GM23248 (cell line): ENCODE measurements at regions of chr10 and their contacts with region 1.

Region 1: GRCh38 chr10:4767033-4767814 is 58.8 kb upstream of the AKR1E2 start:
- DNase-seq: peak; percentile 73
- H3K4me3 ChIP-seq: no peak overlapping the region
- H3K27ac ChIP-seq: peak overlapping the region; percentile 85
- H3K4me1 ChIP-seq: peaks cover 95% of the 10 kb centered on the region
- H3K27me3 ChIP-seq: no peaks in the 10 kb centered on the region

Region 2: DNA sequence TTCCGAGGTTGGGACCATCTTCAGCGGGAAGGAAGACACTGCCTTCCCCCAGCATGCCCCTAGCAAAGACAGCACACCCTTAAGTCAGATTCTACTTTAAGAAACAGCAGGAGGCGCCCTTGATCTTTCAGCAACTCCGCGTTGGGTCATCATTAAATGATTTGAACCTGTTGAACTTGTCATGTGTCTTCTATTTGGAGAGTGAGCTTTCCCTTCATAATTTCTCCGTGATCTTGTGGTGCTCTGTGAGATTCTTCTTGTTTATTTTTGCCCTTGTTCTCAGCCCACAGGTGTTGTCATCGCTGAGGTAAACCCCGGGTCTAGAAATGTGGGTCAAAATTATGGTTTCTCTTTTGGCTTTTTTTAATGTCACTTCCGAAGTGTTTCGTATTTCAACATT is 1545.2 kb before region 1 on chr10:
- in situ Hi-C with region 1: loop called (anchors 25 kb)
- DNase-seq: peak; percentile 74
- H3K4me3 ChIP-seq: peak overlapping the region; percentile 44
- H3K27ac ChIP-seq: peak overlapping the region; percentile 59
- H3K4me1 ChIP-seq: peaks cover 50% of the 10 kb centered on the region
- H3K27me3 ChIP-seq: no peaks in the 10 kb centered on the region

Region 3: DNA sequence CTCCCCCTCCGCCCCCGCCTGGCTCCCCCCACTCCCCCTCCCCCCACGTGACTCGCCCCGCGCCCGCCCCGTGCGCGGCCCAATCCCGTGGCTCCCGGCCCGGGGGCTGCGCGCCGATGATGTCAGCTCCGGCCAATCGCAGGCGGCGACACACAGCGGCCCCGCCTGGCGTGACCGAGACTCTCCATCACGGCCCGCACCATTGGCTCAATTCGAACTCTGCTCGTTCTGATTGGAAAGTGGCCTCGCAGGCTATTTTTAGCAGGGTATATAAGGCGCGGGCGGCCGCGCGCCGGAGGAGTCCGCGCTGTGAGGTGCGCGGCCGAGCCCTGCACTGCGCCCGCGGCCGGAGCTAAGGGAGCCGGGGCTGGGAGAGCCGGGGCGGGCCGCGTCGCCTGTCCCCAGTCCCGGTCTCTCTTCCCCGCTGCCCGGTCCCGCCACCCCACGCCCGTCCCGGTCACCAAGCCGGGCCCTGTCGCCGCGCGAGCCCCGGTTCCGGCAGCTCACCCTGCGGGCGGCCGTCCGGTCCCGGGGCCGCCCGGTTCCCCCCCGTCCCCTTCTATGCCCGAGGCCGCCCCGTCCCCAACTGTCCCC is 981.9 kb before region 1 on chr10:
- in situ Hi-C with region 1: loop called (anchors 25 kb)
- DNase-seq: peak; percentile 97
- H3K4me3 ChIP-seq: peak overlapping the region; percentile 98
- H3K27ac ChIP-seq: peak overlapping the region; percentile 100
- H3K4me1 ChIP-seq: peaks cover 2% of the 10 kb centered on the region; the same call in 1 of the 2 replicates
- H3K27me3 ChIP-seq: no peaks in the 10 kb centered on the region

Region 4: GRCh38 chr10:4241724-4242345 is 525.4 kb before region 1 on chr10:
- in situ Hi-C with region 1: loop called (anchors 25 kb)
- DNase-seq: peak; percentile 96
- H3K4me3 ChIP-seq: peak overlapping the region; percentile 74
- H3K27ac ChIP-seq: peak overlapping the region; percentile 99
- H3K4me1 ChIP-seq: peaks cover 68% of the 10 kb centered on the region
- H3K27me3 ChIP-seq: no peaks in the 10 kb centered on the region

Region 5: DNA sequence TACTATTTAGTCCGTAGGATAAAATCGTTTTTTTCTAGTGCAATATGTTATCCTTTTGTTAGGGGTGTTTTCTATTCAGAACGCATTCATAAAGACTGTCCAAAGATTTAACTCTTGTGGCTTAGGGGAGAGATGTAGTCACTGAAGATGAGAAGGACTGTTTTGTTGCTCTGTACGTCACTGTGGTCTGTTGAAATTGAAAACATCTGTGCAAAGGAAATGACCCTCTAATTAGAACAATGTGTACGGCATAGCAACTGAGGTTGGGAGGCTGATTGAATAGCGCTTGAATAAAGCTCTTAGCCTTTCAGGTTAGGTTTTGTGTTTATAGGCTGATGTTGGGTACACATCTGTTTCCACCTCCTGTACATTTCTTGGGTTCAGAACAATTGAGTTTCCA is 394.6 kb before region 1 on chr10:
- in situ Hi-C with region 1: loop called (anchors 25 kb)
- DNase-seq: peak; percentile 95
- H3K4me3 ChIP-seq: peak overlapping the region; percentile 44
- H3K27ac ChIP-seq: peak overlapping the region; percentile 79
- H3K4me1 ChIP-seq: peaks cover 22% of the 10 kb centered on the region
- H3K27me3 ChIP-seq: no peaks in the 10 kb centered on the region

Region 6: DNA sequence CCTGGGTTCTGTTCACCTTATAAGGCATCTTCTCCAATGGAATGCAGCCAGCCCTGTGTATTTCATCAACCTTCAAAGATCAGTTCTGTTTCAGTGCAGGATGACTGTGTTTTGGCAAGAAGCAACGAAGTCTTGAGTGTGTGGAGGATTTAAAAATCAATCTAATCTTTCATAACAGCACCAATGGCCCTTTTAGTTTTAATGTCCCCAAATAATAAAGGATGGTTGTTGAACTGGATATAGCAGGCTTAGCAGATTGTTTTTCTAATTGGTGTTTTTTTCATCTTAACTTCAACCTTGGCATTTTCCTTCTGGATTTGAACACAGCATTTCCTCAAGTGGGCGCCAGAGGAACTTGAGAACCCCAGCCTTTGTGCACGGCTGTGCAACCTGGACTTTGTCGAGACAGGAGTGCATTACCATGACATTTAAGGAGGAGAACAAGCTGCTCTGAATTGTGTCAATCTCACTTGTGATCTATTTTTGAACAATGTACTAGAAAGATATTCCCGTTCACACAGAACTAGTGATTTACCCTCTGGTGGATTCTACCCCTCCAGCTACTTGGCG is 254.5 kb before region 1 on chr10:
- in situ Hi-C with region 1: loop called (anchors 10 kb)
- DNase-seq: peak; percentile 84
- H3K4me3 ChIP-seq: 0 out of 2 replicates have a peak overlapping the region, but pooled peaks have one; percentile 5
- H3K27ac ChIP-seq: peak overlapping the region; percentile 10; the same call in 1 of the 2 replicates
- H3K4me1 ChIP-seq: peaks cover 30% of the 10 kb centered on the region
- H3K27me3 ChIP-seq: no peaks in the 10 kb centered on the region

Region 7: DNA sequence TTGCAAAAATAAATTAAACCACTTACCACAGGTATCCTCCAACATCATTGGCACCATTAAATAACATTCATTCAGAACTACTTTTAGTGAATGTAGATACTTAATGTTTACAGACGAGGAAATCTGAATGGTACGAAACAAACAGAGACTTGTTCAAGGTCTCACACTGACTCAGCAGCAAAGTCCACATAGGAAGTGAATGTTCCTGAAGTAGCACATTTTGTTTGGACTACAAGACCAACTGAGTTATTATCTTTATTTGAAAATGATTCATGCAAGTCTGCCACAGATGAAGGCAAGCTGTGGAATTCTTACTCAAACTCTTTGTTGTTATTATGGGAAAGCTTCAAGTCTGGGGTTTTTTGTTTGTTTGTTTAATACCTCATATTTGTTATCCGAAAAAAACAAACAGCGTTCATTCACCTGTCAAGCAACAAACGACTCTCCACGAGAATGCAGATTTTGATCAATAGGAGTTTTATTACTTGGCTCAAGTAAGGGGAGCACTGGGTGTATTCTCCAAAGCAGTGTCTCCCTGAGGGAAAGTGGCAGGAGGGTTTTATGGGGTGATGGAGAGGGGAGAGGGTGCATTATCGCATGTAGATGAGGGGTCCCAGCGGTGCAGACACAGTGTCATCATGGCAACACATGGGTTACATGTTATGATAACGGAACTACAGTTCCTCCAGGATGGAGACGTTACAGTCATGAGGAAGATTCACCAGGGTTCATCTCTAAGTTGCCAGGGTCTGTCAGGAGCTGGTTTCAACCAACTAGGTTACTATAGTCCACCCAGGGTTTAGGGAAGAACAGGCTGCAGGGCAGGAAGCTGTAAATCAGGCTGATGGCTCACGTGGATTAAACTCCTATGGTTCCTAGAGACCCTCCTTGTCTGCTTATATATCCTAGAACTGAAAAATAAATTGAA is 88.9 kb before region 1 on chr10:
- in situ Hi-C with region 1: loop called (anchors 10 kb)
- DNase-seq: peak; percentile 87
- H3K4me3 ChIP-seq: peak overlapping the region; percentile 66
- H3K27ac ChIP-seq: peak overlapping the region; percentile 98
- H3K4me1 ChIP-seq: peaks cover 17% of the 10 kb centered on the region
- H3K27me3 ChIP-seq: no peaks in the 10 kb centered on the region